A673 (cell line): ENCODE measurements at regions of chr12 and their contacts with region 1.

Region 1: GRCh38 chr12:50025187-50026059 is at the start of gene RACGAP1:
- DNase-seq: peak; percentile 99
- H3K4me3 ChIP-seq: peak within 1 kb of the TSS; percentile 95
- H3K27ac ChIP-seq: peak within 1 kb of the TSS; percentile 96
- H3K4me1 ChIP-seq: peaks cover 14% of the 10 kb centered on the region
- H3K27me3 ChIP-seq: no peaks in the 10 kb centered on the region
- CTCF ChIP-seq: no peak
- total RNA-seq, gene RACGAP1: 173 and 179 TPM in 2 replicates

Region 2: DNA sequence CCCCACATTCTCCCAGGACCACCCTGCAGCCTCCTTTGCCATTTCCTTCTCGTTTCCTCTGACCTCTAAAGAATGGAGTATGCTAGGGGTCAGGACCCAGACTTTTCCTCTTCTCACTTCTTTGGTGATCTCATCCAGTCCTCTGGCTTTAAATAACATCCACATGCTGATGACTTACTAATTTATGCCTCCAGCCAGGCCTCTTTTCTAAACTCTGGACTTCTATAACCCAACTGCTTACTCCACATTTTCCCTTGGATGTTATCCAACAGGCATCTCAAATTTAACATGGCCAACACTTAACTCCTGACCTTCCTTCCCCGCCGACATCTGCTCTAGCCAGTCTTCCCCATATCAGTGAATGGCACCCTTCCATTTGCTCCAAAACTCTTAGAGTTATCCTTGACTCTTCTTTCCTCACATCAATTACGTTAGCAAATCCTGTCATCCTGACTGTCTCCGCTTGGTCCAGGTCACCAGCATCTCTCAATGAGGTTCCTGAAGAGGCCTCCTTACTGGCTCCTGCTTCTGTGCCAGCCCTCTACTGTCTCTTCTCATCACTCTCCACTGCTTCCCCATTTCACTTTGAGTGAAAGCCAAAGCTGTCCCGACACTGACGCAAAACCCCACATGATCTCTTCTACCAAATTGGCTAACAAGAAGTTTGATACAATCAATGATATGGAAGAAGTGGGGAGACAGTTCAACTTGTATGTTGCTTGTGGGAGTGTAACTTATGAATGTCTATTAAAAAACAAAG is 241.3 kb before region 1 on chr12:
- CTCF ChIA-PET with region 1: no interaction called
- POLR2A ChIA-PET with region 1: no interaction called
- intact Hi-C with region 1: no loop called
- DNase-seq: no peak
- H3K4me3 ChIP-seq: no peak overlapping the region
- H3K27ac ChIP-seq: no peak overlapping the region
- H3K4me1 ChIP-seq: no peaks in the 10 kb centered on the region
- H3K27me3 ChIP-seq: no peaks in the 10 kb centered on the region
- CTCF ChIP-seq: no peak

Region 3: GRCh38 chr12:49847161-49847560 is 178.3 kb before region 1 on chr12:
- CTCF ChIA-PET with region 1: no interaction called
- POLR2A ChIA-PET with region 1: no interaction called
- intact Hi-C with region 1: no loop called
- DNase-seq: no peak
- H3K4me3 ChIP-seq: no peak overlapping the region
- H3K27ac ChIP-seq: no peak overlapping the region
- H3K4me1 ChIP-seq: peaks cover 7% of the 10 kb centered on the region
- H3K27me3 ChIP-seq: no peaks in the 10 kb centered on the region
- CTCF ChIP-seq: no peak

Region 4: GRCh38 chr12:50005175-50005574 is 20.2 kb before region 1 on chr12:
- CTCF ChIA-PET with region 1: interaction called, 4 read pairs
- POLR2A ChIA-PET with region 1: interaction called, 11 read pairs
- intact Hi-C with region 1: no loop called
- DNase-seq: no peak
- H3K4me3 ChIP-seq: no peak overlapping the region
- H3K27ac ChIP-seq: no peak overlapping the region
- H3K4me1 ChIP-seq: no peaks in the 10 kb centered on the region
- H3K27me3 ChIP-seq: no peaks in the 10 kb centered on the region
- CTCF ChIP-seq: no peak